GM12878 (cell line): ENCODE measurements at regions of chr1 and their contacts with region 1.

Region 1: DNA sequence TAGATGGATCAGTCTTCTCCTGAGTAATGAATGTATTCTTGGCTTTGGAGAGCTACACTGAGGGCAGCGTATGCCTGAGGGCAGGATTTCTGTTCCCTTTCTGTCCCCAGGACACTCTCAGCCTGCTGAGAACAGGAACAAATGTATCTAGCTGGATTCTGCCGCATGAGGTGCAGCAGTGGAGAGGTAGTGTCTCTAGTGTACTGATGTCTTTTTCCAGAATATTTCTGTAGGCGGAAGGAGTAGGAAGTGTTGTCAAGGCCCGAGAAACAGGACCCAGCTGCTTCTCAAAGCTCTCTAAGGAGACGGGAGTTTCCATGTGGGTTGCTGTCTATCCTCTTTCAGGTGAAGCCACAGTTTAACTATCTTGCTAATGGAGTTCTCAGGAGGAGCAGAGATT is 65.5 kb downstream of the MT1HL1 start:
- DNase-seq: no peak
- ATAC-seq: no peak
- H3K4me3 ChIP-seq: no peak overlapping the region
- H3K27ac ChIP-seq: no peak overlapping the region
- H3K4me1 ChIP-seq: no peaks in the 10 kb centered on the region
- H3K27me3 ChIP-seq: no peaks in the 10 kb centered on the region; a peak in 1 of 4 replicates
- CTCF ChIP-seq: no peak
- EP300 ChIP-seq: no peak
- POLR2A ChIP-seq: no peak
- RAD21 ChIP-seq: no peak

Region 2: GRCh38 chr1:236716160-236716559 is 222.6 kb before region 1 on chr1:
- CTCF ChIA-PET with region 1: no interaction called
- POLR2A ChIA-PET with region 1: interaction called, 10 read pairs
- RAD21 ChIA-PET with region 1: no interaction called
- SMC1A ChIA-PET with region 1: no interaction called
- in situ Hi-C with region 1: no loop called
- intact Hi-C with region 1: no loop called
- DNase-seq: no peak
- ATAC-seq: no peak
- H3K4me3 ChIP-seq: no peak overlapping the region
- H3K27ac ChIP-seq: no peak overlapping the region
- H3K4me1 ChIP-seq: no peaks in the 10 kb centered on the region
- H3K27me3 ChIP-seq: no peaks in the 10 kb centered on the region
- CTCF ChIP-seq: no peak
- EP300 ChIP-seq: no peak
- POLR2A ChIP-seq: no peak
- RAD21 ChIP-seq: no peak

Region 3: DNA sequence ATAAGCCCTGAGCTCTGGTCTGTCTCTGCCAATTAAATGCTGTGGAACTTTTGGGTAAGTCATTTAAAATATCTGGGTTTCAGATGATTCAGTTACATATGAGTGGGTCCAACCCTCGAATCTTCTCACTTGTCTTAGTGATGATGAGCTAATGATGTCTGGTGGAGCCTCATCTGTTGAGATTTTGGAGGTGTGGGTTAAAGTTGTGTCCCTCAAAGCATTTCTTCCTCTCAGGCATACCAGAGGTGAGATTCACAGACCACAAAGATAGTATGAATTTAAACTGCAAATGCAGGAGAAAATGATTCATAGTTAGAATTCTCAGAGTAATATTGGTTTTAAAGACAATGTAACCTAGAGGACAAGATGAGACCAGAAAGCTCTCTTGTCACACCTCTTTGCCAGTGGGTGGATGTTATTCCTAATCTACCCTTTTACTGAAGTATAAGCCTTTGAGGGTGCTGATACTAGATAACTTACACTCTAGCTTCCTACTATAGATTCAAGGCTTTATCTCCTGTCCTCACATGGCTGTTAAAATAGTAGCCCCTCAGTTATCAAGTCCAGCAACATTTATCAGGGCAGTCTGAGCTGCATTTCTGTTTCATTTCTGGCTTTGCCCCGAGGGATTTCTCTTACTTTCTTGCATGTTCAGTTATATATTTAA is 25.3 kb before region 1 on chr1:
- CTCF ChIA-PET with region 1: no interaction called
- POLR2A ChIA-PET with region 1: no interaction called
- RAD21 ChIA-PET with region 1: no interaction called
- SMC1A ChIA-PET with region 1: no interaction called
- in situ Hi-C with region 1: no loop called
- intact Hi-C with region 1: no loop called
- DNase-seq: no peak
- ATAC-seq: no peak
- H3K4me3 ChIP-seq: no peak overlapping the region
- H3K27ac ChIP-seq: no peak overlapping the region
- H3K4me1 ChIP-seq: no peaks in the 10 kb centered on the region
- H3K27me3 ChIP-seq: no peaks in the 10 kb centered on the region
- CTCF ChIP-seq: no peak
- EP300 ChIP-seq: no peak
- POLR2A ChIP-seq: no peak
- RAD21 ChIP-seq: no peak

Region 4: GRCh38 chr1:236966636-236967035 is 27.9 kb after region 1 on chr1:
- CTCF ChIA-PET with region 1: no interaction called
- POLR2A ChIA-PET with region 1: no interaction called
- RAD21 ChIA-PET with region 1: no interaction called
- SMC1A ChIA-PET with region 1: no interaction called
- in situ Hi-C with region 1: no loop called
- intact Hi-C with region 1: no loop called
- DNase-seq: no peak
- ATAC-seq: no peak
- H3K4me3 ChIP-seq: no peak overlapping the region
- H3K27ac ChIP-seq: no peak overlapping the region
- H3K4me1 ChIP-seq: no peaks in the 10 kb centered on the region
- H3K27me3 ChIP-seq: no peaks in the 10 kb centered on the region; a peak in 1 of 4 replicates
- CTCF ChIP-seq: no peak
- EP300 ChIP-seq: no peak
- POLR2A ChIP-seq: no peak
- RAD21 ChIP-seq: no peak